GM23248 (cell line): ENCODE measurements at regions of chr1 and their contacts with region 1.

Region 1: GRCh38 chr1:178282949-178283367 is 189.1 kb downstream of the RASAL2 start:
- DNase-seq: peak; percentile 74
- H3K4me3 ChIP-seq: no peak overlapping the region
- H3K27ac ChIP-seq: peak overlapping the region; percentile 10; the same call in 1 of the 2 replicates
- H3K4me1 ChIP-seq: peaks cover 30% of the 10 kb centered on the region
- H3K27me3 ChIP-seq: no peaks in the 10 kb centered on the region

Region 2: DNA sequence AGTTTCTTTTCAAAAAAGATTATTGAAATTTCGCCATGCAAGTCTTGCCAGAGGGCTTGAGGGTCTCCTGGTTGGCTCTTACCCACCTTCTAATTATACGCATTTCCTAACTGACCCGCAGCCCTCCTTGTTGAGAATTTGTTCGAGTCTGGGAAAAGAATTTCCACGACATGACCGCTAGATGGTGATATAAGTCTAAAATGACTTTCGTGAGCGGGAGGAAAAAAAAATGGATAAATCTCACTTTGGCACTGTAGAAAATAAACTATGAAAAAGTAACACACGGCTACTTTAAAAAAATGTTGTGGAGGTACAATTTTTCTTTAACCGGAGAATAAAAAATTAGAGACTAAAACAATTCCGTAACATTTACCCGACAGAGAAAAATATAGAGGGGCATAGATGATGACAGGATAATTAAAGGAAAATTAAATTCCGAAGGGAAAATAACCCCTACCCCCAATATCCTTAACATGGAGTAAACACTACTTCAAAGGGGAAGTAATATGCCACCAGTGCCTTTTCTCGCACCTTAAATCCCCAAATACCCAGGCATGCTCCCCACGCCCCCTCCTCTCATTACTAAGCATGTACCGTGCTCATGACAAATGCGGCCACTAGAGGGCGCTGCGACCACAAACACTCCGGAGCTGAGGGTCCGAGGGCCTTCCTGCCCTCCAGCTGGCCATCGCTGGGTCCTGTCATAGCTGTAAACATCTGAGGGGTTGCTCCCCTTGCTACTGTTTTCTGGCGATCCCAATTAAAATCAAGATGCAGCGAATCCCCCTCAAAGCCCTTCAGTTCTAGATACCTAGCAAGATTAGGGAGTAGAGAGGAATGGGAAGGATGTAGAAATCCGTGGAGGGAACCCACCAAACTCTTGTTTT is 1385.4 kb before region 1 on chr1:
- in situ Hi-C with region 1: loop called (anchors 25 kb)
- DNase-seq: peak; percentile 79
- H3K4me3 ChIP-seq: peak overlapping the region; percentile 73
- H3K27ac ChIP-seq: no peak overlapping the region
- H3K4me1 ChIP-seq: peaks cover 5% of the 10 kb centered on the region; the same call in 1 of the 2 replicates
- H3K27me3 ChIP-seq: peaks cover 37% of the 10 kb centered on the region

Region 3: DNA sequence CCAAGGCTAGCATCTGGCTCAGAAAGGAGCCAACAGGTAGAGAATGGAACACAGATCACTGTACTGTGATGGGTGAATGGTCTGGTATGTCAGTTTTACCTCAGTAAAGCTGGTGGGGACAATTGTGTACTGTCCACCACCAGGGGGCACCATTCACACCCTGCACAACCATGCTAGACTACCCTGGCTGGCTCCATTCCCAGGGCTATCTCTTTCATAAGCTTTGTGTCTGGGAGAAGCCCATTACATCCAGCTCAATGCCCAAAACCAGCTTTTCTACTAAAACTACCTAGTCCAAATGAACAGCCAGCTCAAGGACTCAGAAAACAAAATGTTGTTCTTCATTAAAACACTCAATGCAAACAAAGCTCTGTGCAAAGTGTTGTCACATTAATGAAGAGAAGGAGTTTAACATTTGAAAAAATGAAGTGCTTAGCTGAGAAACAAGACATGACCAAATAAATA is 251.1 kb before region 1 on chr1:
- in situ Hi-C with region 1: loop called (anchors 10 kb)
- DNase-seq: peak; percentile 96
- H3K4me3 ChIP-seq: no peak overlapping the region
- H3K27ac ChIP-seq: no peak overlapping the region
- H3K4me1 ChIP-seq: peaks cover 5% of the 10 kb centered on the region
- H3K27me3 ChIP-seq: no peaks in the 10 kb centered on the region

Region 4: GRCh38 chr1:178684542-178685000 is 401.6 kb after region 1 on chr1:
- in situ Hi-C with region 1: no loop called
- DNase-seq: peak; percentile 91
- H3K4me3 ChIP-seq: 0 out of 2 replicates have a peak overlapping the region, but pooled peaks have one; percentile 30
- H3K27ac ChIP-seq: peak overlapping the region; percentile 54
- H3K4me1 ChIP-seq: peaks cover 50% of the 10 kb centered on the region
- H3K27me3 ChIP-seq: no peaks in the 10 kb centered on the region